ENCODE measurements at regions of chr14 and their contacts with region 1.

Region 1: GRCh38 chr14:56686416-56686815 is 106.8 kb downstream of the TMEM260 start:
- DNase-seq: peak; percentile 73
- ATAC-seq: peak; percentile 93

Region 2: DNA sequence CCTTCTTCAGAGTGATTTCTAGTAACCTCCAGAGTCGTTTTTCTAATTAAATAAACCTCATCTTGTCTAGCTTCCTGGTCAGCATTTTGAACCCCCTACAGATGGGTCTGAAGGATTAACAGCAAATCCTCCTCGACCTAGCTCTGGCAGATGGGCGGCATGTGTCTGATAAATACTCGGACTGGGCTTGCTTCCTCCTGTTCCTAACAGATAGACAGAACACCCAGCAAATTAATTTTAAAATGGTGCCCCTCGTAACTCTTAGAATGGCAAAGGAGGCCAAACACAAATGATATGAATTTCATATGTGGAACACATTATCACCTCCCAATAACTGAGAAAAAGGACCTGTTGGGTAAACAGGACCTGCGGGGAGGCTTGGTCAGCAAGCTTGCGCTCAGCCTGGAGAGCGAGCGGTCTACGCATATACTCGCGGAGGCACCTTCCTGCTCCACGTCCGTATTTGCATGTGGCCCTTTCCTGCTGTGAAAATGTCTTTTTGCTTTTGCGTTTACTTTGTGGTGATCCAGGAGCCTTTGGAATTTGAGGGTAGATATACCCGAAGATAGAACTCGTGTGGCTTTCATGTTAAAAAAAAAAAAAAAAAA is 44.2 kb after region 1 on chr14:
- intact Hi-C with region 1: no loop called
- DNase-seq: no peak
- ATAC-seq: no peak

Region 3: GRCh38 chr14:57182760-57183503 is 496.5 kb after region 1 on chr14:
- intact Hi-C with region 1: loop called (anchors 10 kb)
- DNase-seq: no peak
- ATAC-seq: no peak

Region 4: DNA sequence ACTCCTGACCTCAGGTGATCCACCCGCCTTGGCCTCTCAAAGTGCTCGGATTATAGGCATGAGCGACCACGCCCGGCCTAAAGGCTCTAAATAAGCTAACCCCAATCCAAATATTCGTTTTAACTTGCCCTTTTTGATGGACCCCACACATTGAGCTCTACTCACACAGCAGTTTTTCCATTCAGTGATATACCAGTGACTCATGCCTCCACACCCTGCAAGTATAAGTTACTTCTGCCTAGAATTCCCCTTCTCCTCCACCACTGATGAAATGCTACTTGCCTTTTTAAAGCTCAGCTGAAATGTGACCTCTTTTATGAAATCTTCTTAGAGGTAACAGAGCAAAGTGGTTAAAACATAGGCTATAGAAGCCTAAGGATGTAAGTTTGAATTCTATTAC is 513.5 kb after region 1 on chr14:
- intact Hi-C with region 1: loop called (anchors 5 kb)
- DNase-seq: no peak
- ATAC-seq: no peak